ENCODE measurements at regions of chr12 and their contacts with region 1.

Region 1: DNA sequence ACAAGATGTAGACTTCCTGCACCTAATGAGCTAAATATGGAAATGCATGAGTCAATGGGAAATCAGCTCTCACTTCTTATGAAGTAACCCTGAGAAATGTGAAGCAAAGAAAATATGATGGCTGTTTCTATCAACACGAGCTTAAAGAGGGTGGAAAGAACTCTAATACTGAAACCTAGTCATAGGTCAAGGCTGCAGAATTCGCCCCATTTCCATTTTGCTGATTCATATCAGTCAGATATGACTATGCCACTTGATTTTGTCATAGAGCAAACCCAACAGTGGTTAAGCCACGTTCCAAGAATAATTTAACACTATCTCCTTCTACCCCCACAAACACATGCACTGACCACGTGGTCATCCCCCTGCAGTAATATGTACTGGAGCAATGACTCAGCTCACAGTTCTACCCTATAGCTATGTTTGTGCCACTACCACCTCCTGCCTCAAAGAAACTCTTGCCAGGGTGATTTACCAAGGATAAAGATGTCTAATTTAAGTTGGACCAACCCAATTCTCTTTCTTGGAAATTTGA is 157.5 kb downstream of the TMTC3 start:
- DNase-seq: peak; percentile 46
- H3K4me3 Mint-ChIP-seq: no peak overlapping the region
- H3K27ac Mint-ChIP-seq: peak overlapping the region; percentile 90
- H3K4me1 Mint-ChIP-seq: peaks cover 48% of the 10 kb centered on the region
- H3K27me3 Mint-ChIP-seq: no peaks in the 10 kb centered on the region

Region 2: DNA sequence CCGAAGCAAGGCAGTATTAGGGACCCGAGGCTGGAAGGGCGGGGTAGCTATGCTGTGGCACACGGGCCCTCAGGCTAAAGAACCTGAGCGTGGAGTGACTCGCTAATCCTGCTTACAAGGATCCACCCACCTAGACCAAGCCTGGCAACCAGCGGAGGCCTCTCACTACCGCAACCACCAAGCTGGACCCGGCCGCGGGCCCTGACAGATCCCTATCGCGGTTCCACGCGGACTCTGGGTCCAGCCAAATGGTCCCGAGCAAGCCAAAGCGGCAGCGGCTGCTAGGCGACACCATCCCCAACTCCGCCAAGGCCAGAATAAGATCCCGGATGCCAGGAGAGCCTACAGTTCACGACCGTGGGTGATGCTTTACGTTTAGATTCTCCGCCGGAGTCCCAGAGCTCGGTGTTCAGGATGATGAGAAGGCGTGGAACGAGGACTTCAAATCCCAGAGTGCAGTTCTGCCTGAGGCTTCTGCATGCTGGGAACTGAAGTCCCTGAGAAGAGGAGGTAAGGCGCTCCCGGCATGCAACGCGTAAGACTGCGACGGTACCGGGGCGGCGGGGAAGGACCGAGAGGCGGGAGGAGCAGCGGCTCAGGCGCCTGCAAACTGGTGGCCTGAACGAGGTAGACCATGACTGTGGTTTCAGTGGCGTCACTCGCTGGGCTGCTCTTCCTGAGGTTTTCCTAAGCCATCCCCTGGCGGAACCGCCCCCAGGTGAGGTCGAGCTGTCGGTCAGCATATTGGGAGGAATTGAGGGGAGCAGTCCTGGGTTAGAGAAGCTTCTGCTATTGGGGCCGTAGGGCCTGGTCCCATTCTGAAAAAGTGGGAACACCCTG is 157.6 kb before region 1 on chr12 and contains the starts of genes CEP290 and TMTC3:
- intact Hi-C with region 1: loop called (anchors 1 kb)
- DNase-seq: peak; percentile 93
- H3K4me3 Mint-ChIP-seq: peak within 1 kb of the TSS; percentile 94
- H3K27ac Mint-ChIP-seq: peak within 1 kb of the TSS; percentile 91
- H3K4me1 Mint-ChIP-seq: peaks cover 34% of the 10 kb centered on the region
- H3K27me3 Mint-ChIP-seq: no peaks in the 10 kb centered on the region
- total RNA-seq, gene CEP290: 16.0 TPM in 2 replicates
- total RNA-seq, gene TMTC3: 7.2 and 8.1 TPM in 2 replicates

Region 3: DNA sequence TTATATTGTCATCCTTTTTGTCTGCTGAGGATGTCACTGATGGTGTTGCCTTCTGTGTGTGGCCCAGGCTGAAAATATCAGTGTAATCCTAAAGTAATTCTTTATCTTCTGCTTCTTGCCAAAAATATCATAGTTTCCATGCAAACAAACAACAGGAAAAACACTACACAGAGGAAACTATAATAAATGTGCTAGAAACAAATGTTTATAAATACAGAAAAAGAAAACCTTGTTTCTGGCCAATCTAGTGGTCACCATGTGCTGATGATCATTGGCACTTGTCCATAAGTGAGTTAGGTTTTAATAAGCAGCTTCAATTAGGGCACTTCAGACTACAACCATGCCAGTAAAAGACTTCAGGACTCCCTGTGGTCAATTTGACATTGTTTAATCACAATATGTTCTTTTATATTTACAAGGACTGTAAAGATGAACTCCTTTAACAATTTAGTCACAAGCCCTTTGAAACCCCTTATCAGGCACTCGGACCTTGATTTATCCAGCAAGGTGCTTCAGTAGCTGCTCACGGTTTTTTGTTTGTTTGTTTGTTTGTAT is 32.8 kb before region 1 on chr12:
- intact Hi-C with region 1: loop called (anchors 2 kb)
- DNase-seq: no peak
- H3K4me3 Mint-ChIP-seq: no peak overlapping the region
- H3K27ac Mint-ChIP-seq: no peak overlapping the region
- H3K4me1 Mint-ChIP-seq: peaks cover 4% of the 10 kb centered on the region
- H3K27me3 Mint-ChIP-seq: no peaks in the 10 kb centered on the region

Region 4: DNA sequence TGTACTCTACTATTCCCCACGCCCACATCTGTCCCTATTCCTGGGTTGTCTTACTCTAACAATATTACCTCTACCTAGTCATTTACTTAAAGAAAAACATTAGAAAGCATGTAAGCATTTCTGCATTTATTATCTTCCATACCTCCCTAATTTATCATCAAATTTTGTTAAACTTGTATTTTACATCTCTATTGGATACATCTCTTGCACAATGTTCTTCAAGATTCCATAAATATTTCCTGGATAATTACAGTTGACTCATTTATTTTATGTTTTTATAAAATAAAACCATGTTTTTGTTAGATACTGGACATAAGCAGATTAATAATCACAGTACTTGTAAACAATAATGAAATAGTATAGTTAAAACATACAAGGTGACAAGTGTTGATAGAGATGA is 51.5 kb after region 1 on chr12:
- intact Hi-C with region 1: no loop called
- DNase-seq: no peak
- H3K4me3 Mint-ChIP-seq: no peak overlapping the region
- H3K27ac Mint-ChIP-seq: no peak overlapping the region
- H3K4me1 Mint-ChIP-seq: no peaks in the 10 kb centered on the region
- H3K27me3 Mint-ChIP-seq: no peaks in the 10 kb centered on the region

Region 5: DNA sequence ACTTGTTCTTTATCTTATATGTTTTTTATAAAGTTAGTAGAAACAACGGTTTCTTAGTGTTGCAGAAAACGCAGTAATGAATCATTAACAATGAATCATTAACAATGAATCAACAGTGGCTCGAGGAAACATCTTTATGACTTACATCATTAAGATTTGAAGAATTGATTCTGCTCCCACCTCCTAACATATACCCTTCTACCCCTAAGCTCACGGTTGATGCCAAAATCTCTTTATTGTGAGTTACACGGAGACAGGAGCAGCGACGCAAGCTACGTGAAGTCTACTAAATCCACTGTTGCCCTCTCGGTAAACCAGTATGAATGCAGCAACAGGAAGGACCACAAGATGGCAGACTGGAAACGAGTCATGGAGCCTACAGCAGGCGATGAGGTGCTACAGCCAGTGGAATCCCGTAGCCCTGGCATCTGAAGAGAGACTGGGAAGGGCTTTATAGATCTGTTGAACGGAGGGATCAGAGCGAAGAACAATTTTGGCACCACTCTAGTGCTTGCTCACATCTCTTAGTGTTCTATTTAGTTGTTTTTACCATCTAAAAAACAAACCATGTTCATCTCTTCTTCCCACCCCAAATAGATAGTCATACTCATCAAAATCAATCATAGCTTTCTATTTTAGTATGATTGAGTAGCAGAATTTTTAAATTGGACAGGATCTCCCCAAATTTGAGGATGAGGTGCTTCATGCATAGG is 719.9 kb after region 1 on chr12:
- intact Hi-C with region 1: loop called (anchors 5 kb)
- DNase-seq: peak; percentile 75
- H3K4me3 Mint-ChIP-seq: no peak overlapping the region
- H3K27ac Mint-ChIP-seq: no peak overlapping the region
- H3K4me1 Mint-ChIP-seq: peaks cover 27% of the 10 kb centered on the region
- H3K27me3 Mint-ChIP-seq: peaks cover 1% of the 10 kb centered on the region

Region 6: DNA sequence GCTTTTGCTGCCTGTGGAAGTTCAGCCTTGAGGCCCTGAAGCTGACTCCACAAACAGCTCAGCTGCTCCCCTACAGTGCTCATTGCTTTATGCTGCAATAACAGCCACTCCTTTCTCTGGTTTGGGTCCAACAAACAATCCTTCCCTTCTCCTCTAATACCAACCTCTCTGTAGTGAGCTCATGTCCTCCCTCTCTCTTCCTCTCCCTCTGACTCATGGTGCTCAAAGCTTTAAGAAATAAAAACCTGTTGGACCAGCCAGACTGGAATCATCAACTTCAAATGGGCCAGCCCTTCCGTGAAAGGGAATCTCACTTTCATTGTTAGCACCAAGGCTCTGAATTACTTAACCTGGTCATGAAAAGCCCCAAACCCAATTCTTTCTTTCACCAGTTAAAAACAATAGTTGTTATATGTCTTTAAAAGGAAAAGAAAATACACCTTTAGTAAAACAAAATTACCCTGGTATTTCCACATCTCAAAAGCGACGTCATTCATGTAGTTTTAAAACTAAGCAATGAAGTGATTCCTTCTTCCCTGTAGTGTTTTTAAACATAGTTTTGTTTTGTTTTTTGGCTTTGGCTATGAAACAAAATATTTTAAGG is 926.3 kb after region 1 on chr12:
- intact Hi-C with region 1: loop called (anchors 2 kb)
- DNase-seq: no peak
- H3K4me3 Mint-ChIP-seq: peak overlapping the region; percentile 70
- H3K27ac Mint-ChIP-seq: peak overlapping the region; percentile 100
- H3K4me1 Mint-ChIP-seq: peaks cover 67% of the 10 kb centered on the region
- H3K27me3 Mint-ChIP-seq: no peaks in the 10 kb centered on the region

Region 7: DNA sequence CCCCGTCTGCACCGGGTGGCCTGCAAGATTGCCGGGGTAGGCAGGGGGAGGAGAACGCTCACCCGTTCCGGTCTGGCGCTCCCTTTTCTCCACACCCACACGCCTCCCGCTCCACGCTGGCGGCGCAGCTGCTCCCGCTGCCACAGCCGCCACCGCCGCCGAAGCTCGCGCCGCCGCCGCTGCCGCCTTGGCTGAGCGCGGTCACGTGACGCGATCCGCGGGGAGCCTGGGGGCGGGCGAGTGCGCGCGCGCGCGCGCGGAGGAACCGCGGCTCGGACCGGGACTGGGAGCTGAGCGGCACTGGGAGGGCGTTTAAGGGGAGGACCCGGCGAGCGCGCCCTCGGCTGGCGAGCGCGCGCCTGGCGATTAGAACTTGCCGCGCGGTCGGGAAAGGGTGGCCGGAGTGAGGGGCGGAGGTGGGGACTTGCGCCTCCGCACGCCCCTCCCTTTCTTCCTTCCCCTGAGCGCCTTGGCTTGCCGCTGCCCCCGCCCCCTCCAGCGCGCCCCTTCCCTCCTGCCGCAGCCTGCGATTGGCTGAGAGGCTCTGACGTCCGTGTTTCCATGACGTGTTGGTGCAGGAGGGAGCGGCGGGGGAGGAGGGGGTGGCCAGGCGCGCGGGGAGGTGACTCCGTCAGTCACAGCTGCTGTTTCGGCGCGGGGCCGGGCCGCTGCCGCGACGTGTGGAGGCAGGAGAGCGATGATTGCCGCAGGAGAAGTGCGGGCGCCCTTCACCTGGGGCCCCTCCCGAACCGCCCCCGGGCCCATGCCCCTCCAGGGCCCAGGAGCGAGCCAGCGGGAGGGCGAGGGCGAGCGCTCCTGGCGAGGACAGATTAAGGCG is 1409.7 kb after region 1 on chr12:
- intact Hi-C with region 1: loop called (anchors 2 kb)
- DNase-seq: peak; percentile 97
- H3K4me3 Mint-ChIP-seq: peak overlapping the region; percentile 82
- H3K27ac Mint-ChIP-seq: peak overlapping the region; percentile 83
- H3K4me1 Mint-ChIP-seq: peaks cover 35% of the 10 kb centered on the region
- H3K27me3 Mint-ChIP-seq: peaks cover 47% of the 10 kb centered on the region

Measured in activated T-helper 2 cell treated with anti-CD3 and anti-CD28 coated beads, Interferon-gamma antibody, Interleukin-2, Interleukin-4, amounts not matched to agents 10 μg/mL and 5 μg/mL and 100 μg/mL, durations not matched to agents 14 hours and 24 hours and 36 hours (primary cell).